KBM-7 (cell line): ENCODE measurements at regions of chr3 and their contacts with region 1.

Region 1: GRCh38 chr3:159260049-159260662 is 458.3 kb downstream of the MFSD1 start:
- DNase-seq: peak; percentile 37

Region 2: DNA sequence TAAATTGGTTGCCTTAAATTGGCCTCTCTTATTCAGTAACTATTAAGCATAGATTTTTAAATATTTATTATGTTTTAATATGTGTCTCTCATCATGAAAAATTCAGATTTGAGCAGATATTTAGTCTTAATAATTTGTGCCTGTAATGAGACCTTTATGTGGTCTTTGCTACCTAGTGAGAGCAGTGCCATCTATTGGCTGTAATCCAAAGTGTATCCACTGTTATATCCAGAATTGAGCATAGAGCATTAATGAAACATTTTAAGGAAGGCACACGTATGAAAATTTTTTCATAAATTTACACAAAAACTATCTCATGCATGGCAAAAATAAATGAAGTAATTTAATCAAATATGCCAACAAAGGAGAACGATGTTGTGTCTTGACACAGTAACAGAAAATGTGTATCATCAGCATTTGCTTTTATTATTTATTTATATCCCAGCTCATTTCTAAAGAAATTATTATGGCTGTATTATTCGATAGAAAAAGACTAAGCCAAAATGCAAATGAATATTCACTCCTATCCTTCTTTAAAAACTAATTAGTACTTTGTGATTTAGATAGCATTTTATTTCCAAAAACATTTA is 946.7 kb before region 1 on chr3:
- in situ Hi-C with region 1: no loop called
- DNase-seq: peak; percentile 49

Region 3: GRCh38 chr3:158602227-158602626 is 657.9 kb before region 1 on chr3:
- in situ Hi-C with region 1: no loop called
- DNase-seq: no peak

Region 4: DNA sequence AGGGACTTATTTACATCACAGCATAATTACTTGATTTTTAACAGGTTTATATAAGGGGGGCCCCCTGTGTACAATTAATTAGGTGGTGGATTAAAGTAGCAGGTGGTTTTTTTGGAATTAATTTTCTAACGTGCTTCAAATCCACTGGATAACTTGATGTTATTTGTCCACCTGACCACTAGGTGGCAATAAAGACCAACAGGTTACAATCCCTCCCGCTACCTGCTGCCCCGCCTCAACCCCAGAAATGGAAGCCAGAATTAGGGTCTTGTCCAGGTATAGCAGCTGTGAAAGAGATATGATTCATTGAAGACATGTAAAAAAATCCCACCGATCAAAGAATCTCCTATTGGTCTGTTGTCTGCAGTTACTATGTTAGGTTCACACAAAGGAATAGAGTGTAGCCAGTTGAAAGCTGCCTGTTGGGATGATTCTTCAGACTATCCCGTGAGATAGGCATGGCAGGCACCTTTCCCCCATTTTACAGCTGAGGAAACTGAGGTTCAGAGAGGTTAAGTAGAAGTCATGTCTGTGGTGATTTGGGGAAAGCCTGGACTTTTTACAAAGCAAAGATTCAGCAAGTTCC is 414.3 kb before region 1 on chr3:
- in situ Hi-C with region 1: loop called (anchors 25 kb)
- DNase-seq: peak; percentile 51

Region 5: DNA sequence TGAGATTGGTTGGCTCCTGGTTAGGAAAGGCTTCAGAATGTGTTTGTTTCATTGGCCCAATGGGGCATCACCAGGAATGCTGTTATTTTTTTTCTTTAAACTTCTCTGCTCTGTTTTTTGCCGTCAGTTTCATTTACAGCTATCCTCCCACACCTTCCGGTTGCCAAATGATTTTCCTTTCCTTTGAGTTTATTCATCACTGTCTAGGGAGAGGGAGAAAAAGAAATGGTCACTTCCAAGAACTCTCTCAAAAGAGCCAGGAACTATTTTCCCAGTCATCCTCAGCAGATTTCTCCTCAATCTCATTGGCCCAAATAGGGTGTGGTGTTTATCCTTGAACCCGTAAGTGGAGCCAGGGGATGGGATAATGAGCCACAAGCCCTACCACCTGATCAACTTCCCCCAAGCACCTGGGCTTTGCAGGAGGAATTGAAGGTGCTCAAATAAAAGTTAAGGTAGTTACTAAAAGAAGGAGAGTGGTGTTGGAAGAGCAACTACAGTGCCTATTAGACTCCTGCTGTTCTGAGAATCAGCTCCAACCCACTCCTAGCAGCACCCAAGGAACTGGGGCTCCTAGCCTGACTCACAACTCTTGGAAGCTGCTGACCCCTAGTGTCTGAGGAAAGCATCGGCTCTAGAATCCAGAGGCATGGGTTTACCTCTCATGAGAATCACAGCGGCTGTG is 544.7 kb after region 1 on chr3:
- in situ Hi-C with region 1: loop called (anchors 25 kb)
- DNase-seq: peak; percentile 62

Region 6: DNA sequence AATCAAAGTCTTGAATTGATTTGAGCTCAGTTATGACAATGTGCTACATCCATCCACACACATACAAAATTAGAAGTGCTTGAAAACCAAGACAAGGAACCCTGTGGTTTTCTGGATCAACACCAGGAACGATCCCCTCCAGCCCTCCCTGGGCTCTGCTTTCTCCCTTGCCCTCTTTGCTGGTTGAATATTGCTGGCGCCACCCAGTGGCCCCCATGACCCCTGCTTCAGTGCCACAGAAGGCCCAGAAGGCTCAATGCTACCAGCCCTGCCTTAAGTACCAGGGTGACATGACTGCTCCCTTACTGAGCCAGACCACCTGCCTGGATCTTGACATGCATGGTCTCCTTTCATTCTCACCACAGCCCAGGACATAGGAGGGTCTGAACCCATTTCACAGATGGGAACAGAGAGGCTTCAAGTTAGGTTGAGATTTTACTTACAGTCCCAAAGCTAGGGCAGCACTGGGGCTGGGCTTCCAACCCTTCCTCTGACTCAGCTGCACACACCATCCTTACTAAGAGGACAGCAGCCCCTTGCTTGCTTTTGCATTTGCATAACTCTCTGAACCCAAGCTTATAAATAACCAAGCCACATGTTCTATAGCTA is 743.5 kb after region 1 on chr3:
- in situ Hi-C with region 1: loop called (anchors 25 kb)
- DNase-seq: peak; percentile 80